ENCODE measurements at regions of chr11 and their contacts with region 1.

Region 1: DNA sequence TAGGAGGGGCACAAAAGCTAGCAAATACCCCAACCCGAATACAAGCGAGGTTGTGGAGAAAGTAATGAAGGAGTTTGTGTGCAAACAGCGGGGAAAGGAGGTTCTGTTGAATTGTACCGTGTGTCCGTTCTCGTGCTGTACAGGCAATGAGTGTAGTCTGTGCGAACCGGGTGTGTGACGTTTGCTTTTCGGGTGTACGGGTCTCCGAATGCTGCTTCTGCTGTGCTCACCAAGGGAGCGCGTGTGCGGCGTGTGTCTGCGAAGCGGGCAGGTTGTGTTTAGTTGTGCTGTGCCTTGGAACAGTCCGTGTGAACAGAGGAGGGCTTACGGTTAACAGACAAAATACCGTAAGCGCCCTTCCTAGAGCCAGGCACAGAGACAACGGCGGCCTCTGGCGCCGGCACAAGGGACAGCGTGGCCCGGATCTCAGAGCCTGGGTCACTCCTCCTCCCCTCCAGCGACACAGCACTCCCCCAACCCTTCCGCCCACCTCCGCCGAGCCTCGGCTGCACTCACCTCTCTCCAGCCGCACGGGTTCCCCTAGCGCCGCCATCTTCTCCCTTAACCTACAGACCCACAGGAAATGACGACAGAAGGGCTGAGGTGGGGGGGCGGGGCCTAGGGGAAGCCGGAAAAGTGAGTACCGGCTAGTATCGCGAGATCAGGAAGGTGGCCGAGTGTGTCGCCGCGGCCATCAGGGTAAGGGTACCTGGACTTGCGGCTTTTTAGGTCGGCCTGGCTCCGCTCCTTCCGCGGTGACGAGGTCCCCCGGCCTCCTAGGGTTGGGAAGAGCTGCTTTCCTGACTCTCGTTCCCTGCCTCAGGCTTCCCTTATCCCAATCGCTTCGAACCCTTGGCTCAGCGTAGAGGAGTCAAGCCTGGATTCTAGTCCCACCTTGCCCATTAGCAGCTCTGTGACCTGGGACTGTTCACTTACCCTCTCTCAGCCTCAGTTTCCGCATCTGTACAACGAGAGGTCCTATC is at the start of gene LIN7C:
- DNase-seq: peak; percentile 81
- H3K4me3 Mint-ChIP-seq: peak within 1 kb of the TSS; percentile 100
- H3K27ac Mint-ChIP-seq: peak within 1 kb of the TSS; percentile 100
- H3K4me1 Mint-ChIP-seq: peaks cover 45% of the 10 kb centered on the region
- H3K27me3 Mint-ChIP-seq: no peaks in the 10 kb centered on the region
- total RNA-seq, gene LIN7C: 33.8 and 35.8 TPM in 2 replicates

Region 2: DNA sequence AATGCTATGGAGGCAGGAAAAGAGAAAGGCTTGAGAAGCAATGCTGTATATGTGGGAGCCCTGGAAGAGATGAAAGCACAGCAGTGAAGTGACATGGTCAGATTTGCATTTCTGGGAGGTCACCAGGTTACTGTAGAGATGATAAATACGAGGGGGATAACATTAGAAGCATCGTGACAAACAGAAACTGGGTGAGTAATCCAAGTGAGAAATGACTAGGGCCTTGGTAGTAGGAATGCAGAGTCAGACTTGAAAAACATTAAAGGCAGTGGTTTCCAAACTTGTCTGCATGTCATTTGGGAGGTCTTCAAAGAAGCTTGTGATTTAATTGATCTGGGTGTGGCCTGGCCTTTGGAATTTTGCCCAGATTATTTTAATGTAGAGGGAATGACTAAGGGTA is 187.4 kb before region 1 on chr11:
- intact Hi-C with region 1: loop called (anchors 1 kb)
- DNase-seq: no peak
- H3K4me3 Mint-ChIP-seq: no peak overlapping the region
- H3K27ac Mint-ChIP-seq: no peak overlapping the region
- H3K4me1 Mint-ChIP-seq: no peaks in the 10 kb centered on the region
- H3K27me3 Mint-ChIP-seq: no peaks in the 10 kb centered on the region

Region 3: DNA sequence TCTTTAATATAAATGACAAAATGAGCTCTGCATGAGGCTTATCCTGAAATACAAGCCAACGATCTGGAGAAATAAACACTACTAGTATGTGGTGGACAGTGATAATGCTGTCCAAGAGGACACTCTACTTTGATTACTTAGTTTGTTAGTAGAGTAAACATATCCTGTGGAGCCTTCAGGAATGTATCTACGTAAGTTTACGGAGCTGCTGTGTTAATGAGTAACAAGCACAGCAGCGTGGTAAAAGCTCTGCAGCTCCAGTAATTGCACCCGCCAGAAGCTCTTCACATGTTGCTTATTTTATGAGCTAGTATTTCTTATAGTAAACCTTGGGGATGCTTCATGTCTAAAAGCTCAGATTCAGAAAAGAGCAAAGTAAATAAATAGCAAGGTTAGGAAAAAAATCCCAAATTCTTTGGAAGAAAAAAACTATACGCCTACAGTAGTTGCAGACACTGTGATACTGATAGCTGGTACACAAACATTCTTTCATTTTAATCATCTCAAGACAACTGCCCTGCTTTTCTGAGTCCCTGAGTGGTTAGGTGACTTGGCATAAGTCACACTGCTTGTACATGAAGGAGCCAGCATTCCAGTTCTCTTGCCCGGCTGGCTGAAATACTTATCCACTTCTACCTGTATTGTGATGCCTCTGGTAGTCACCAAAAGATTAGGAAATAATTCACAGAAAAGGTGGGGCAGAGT is 110.8 kb before region 1 on chr11:
- intact Hi-C with region 1: no loop called
- DNase-seq: no peak
- H3K4me3 Mint-ChIP-seq: no peak overlapping the region
- H3K27ac Mint-ChIP-seq: no peak overlapping the region
- H3K4me1 Mint-ChIP-seq: no peaks in the 10 kb centered on the region
- H3K27me3 Mint-ChIP-seq: no peaks in the 10 kb centered on the region

Region 4: DNA sequence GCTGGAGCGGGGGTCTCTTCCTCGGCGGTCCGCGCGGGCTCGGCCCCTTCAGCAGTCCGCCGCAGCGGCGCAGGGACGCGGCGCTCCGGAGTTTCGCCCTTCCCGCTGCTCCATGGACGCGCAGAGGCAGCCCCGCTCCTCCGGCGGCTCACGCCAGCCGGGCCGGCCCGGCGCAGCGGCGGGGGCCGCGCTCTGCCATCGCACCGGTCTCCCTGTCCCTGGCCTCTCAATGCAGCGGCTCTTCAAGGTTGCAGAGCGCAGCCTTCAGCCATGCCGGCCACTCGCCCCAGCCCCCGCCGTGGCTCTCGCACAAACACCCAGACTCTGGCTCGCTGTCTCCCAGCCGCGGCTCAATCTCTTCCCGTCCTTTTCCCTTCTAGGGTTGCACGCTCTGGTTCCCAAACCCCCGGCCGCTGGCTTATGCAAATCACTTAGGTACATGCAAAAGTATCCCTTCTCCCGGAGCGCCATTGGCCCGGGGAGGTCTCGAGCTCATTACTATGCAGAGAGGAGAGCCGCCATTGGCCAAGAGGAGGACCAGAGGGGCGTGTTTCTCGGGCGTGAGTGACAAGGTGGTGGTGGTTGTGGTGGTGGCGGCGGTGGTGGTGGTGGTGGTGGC is 34.0 kb before region 1 on chr11 and contains the start of gene LGR4:
- intact Hi-C with region 1: loop called (anchors 2 kb)
- DNase-seq: peak; percentile 31
- H3K4me3 Mint-ChIP-seq: peak within 1 kb of the TSS; percentile 84
- H3K27ac Mint-ChIP-seq: no peak within 1 kb of the TSS
- H3K4me1 Mint-ChIP-seq: peaks cover 6% of the 10 kb centered on the region
- H3K27me3 Mint-ChIP-seq: peaks cover 47% of the 10 kb centered on the region
- total RNA-seq, gene LGR4: 0.05 TPM in 1 of 2 replicates, not detected in the other